ENCODE measurements at regions of chr3 and their contacts with region 1.

Region 1: DNA sequence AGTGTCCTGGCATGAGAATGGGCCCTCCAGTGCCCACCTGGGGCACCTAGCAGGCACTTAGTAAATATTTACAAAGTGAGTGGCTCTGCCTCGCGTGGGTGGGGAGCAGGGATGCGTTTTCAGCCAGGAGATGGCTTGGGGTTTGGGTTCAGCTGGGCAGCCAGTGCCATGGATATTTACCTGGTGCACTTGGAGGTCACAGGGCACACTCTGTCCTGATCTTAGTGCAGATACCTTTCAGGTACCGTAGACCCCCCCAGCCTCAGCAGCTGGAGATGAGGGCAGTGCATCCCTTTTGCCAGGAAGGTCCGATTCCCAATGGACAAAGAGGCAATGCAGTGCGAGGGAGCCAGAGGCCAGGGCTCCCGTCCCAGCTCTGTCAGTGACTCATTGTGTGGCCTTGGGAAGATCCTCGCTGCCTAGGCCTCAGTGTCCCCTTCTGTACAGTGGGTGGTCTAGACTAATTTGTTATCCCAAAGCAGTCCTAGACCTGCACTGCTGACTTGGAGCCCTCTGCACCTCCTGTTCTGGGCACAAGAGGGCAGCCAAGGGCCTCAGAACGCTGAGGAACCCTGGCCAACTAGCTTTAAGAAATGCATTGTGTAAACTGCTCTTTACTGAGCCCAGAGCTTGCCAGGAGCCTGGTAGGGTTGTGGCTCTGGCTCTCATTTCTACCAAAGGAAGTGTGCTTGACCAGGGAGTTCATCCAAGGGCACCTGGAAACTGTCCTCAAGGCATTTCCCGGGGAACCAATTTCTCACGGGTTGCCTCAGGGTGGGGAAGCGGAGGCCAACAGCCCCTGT is 16.0 kb downstream of the HDAC11 start:
- DNase-seq: no peak
- H3K4me3 ChIP-seq: no peak overlapping the region
- H3K27me3 ChIP-seq: no peaks in the 10 kb centered on the region
- CTCF ChIP-seq: peak; percentile 95

Region 2: GRCh38 chr3:13391308-13391707 is 104.8 kb before region 1 on chr3:
- CTCF ChIA-PET with region 1: no interaction called
- POLR2A ChIA-PET with region 1: no interaction called
- DNase-seq: no peak
- H3K4me3 ChIP-seq: no peak overlapping the region
- H3K27me3 ChIP-seq: 0 out of 2 replicates have a peak, but pooled peaks cover 1% of the 10 kb centered on the region
- CTCF ChIP-seq: 0 out of 2 replicates have a peak, but pooled peaks have one; percentile 5

Region 3: GRCh38 chr3:13507769-13508339 is 11.7 kb after region 1 on chr3:
- CTCF ChIA-PET with region 1: interaction called, 27 read pairs
- POLR2A ChIA-PET with region 1: no interaction called
- DNase-seq: no peak
- H3K4me3 ChIP-seq: no peak overlapping the region
- H3K27me3 ChIP-seq: no peaks in the 10 kb centered on the region
- CTCF ChIP-seq: no peak

Region 4: DNA sequence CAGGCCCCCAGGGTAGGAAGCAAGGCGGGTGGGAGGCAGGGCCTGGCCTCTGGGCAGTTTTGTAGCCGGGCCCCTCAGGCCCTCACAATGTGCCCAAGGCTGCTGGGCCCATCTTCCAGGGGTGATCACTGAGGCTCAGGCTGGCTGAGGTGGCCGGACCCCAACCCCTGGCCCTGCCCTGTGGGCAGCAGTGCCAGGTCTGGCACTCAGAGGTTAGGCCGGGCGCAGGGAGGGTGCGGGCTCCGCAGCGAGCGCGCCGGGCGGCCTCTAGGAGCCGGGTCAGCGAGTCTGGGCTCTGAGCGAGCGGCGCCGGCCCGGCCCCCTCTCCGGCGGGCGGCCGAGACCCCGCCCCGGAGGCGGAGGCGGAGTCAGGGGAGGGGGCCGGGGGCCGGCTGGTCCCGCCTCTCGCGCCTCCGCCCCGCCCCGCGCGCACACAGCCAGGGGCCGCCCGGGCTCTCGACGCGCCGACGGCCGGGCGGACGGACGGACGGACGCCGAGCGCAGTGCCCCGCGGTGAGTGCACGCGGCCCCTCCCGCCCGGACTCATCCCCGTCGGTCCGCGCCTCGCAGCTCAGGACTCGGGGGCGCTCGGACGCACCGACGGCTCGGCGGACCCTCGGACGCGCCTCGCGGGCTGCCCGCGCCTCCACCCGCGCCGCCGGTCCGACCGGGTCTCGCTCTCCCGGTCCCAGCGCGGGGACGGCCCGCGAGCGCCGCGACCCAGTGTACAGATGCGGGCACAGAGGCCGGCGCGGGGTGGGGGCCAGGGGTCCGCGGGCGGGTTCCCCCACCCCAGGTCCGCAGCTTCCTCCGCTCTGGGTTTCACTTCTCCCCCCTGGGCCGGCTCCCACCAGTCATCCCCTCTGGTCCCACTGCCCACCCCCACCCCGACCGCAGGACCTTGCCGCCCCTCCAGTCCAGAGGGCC is 52.8 kb after region 1 on chr3 and contains the start of gene FBLN2:
- CTCF ChIA-PET with region 1: interaction called, 14 read pairs
- POLR2A ChIA-PET with region 1: no interaction called
- DNase-seq: no peak
- H3K4me3 ChIP-seq: peak within 1 kb of the TSS; percentile 61
- H3K27me3 ChIP-seq: no peaks in the 10 kb centered on the region
- CTCF ChIP-seq: no peak
- polyA plus RNA-seq, gene FBLN2: 131 and 248 TPM in 2 replicates

Region 5: GRCh38 chr3:13623099-13623654 is 127.1 kb after region 1 on chr3:
- CTCF ChIA-PET with region 1: interaction called, 17 read pairs
- POLR2A ChIA-PET with region 1: no interaction called
- DNase-seq: no peak
- H3K4me3 ChIP-seq: no peak overlapping the region
- H3K27me3 ChIP-seq: no peaks in the 10 kb centered on the region
- CTCF ChIP-seq: no peak

Region 6: GRCh38 chr3:13648060-13649001 is 152.2 kb after region 1 on chr3:
- CTCF ChIA-PET with region 1: interaction called, 655 read pairs
- POLR2A ChIA-PET with region 1: interaction called, 3 read pairs
- DNase-seq: no peak
- H3K4me3 ChIP-seq: no peak overlapping the region
- H3K27me3 ChIP-seq: no peaks in the 10 kb centered on the region
- CTCF ChIP-seq: peak; percentile 99

Region 7: GRCh38 chr3:14791343-14791945 is 1295.3 kb after region 1 on chr3:
- CTCF ChIA-PET with region 1: no interaction called
- POLR2A ChIA-PET with region 1: no interaction called
- DNase-seq: no peak
- H3K4me3 ChIP-seq: no peak overlapping the region
- H3K27me3 ChIP-seq: no peaks in the 10 kb centered on the region; the same call in none of the 2 replicates
- CTCF ChIP-seq: peak; percentile 61